Right lobe of liver (tissue), 6 donors: ENCODE measurements at regions of chr3 and their contacts with region 1.

Region 1: GRCh38 chr3:160343132-160343531 is 55.9 kb downstream of the IFT80 start:
- DNase-seq: no peak
- ATAC-seq: peak in 3 of 4 donors; percentile 47 to 60 (median 56)
- H3K4me3 ChIP-seq: no peak overlapping the region
- H3K27ac ChIP-seq: no peak overlapping the region
- H3K4me1 ChIP-seq: no peaks in the 10 kb centered on the region
- H3K27me3 ChIP-seq: no peaks in the 10 kb centered on the region
- CTCF ChIP-seq: peak; percentile 50 to 61 (median 53)
- POLR2A ChIP-seq: no peak

Region 2: DNA sequence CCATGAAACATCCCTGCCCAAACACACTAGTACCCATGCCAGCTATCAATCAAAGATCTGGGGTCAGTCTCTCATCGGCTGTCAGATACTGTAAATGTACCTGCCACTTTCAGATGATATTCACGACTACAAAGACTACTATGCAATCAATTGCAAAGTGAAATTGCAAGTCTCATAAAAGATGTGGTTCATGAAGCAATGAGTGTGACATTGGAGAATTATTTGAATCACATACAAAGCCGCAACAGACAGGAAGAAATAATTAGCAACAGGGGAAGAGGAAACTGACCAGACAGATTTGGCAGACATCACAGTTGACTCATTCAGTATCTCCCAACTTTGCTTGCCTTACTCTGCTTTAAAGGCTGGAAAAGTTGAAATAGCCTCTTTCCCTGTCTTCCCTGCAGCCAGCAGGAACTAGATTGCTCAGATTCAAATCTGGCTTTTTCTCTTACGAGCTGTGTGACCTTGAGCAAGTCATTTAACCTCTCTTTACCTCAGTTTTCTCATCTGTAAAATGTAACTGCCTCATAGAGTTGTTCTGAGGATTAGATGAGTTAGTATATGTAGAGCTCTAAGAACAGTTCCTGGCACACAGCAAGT is 213.6 kb before region 1 on chr3:
- intact Hi-C with region 1: no loop called
- DNase-seq: no peak
- ATAC-seq: peak in 3 of 4 donors; percentile 14 to 83 (median 46)
- H3K4me3 ChIP-seq: no peak overlapping the region
- H3K27ac ChIP-seq: no peak overlapping the region
- H3K4me1 ChIP-seq: no peaks in the 10 kb centered on the region
- H3K27me3 ChIP-seq: no peaks in the 10 kb centered on the region
- CTCF ChIP-seq: no peak
- POLR2A ChIP-seq: no peak

Region 3: DNA sequence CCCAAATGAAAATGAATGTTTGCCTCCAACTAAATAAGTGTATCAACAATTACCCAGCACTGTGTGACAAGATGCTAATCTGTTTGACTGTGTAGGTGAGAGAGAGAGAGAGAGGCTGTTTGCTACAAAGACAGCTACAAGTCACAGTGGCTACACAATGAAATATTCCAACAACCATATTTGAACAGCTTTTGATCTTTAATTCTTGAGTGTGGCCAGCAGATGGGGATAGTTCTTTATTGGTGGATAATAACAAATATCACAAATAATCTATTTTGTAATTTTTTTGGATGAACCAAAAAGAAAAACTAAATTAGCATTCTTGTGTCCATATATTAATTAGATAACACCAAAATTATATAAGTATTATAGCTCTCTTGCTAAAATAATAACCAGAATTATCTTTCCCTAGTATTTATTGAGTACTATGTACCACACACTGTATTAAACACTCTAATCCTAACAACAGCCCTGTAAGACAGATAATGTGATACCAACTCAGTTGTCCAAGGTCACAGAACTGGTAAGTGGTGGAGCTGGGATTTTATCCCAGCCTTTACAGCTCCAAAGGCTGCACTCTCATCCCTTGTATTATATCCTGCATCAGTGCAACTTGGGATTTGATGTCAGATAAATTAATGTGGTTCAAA is 179.8 kb before region 1 on chr3:
- intact Hi-C with region 1: loop called in 1 of 2 experiments (anchors 5 kb)
- DNase-seq: no peak
- ATAC-seq: peak; percentile 61 to 72 (median 66)
- H3K4me3 ChIP-seq: no peak overlapping the region
- H3K27ac ChIP-seq: no peak overlapping the region
- H3K4me1 ChIP-seq: no peaks in the 10 kb centered on the region
- H3K27me3 ChIP-seq: no peaks in the 10 kb centered on the region
- CTCF ChIP-seq: peak; percentile 55 to 65 (median 60)
- POLR2A ChIP-seq: no peak

Region 4: GRCh38 chr3:160169139-160169976 is 173.8 kb before region 1 on chr3:
- intact Hi-C with region 1: loop called in 1 of 2 experiments (anchors 5 kb)
- DNase-seq: no peak
- ATAC-seq: no peak
- H3K4me3 ChIP-seq: no peak overlapping the region
- H3K27ac ChIP-seq: no peak overlapping the region
- H3K4me1 ChIP-seq: no peaks in the 10 kb centered on the region
- H3K27me3 ChIP-seq: no peaks in the 10 kb centered on the region
- CTCF ChIP-seq: no peak
- POLR2A ChIP-seq: no peak

Region 5: DNA sequence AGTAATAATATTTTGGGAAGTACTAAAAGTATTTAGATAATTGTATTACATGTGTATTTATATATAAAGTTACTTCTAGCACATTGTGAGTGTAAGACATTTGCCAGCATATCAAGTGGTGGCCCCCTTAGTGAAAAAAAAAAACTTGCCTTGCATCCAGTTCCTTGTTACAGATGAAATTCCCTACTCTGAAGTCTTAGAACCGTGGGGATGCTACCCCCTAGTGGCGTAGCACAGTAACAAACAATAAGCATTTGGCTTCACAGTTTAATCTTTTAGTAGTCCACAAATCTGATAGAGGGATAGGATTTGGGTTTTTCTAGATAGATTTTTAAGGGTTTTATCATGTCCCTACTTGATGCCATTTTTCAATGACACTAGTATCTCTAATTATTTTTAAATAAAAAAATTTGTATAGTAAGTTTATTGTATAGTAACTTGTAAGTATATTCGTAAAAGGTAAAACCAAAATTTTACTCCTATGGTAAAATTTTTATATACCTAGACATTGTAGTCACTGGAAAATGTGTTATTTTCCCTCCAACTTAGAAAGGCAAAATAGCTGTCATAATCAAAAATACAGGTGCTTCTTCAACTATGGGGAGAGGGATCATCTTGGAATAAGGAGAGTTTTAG is 70.6 kb after region 1 on chr3:
- intact Hi-C with region 1: no loop called
- DNase-seq: peak in 2 of 3 donors; percentile 35 to 59
- ATAC-seq: peak; percentile 89 to 98 (median 95)
- H3K4me3 ChIP-seq: no peak overlapping the region
- H3K27ac ChIP-seq: no peak overlapping the region
- H3K4me1 ChIP-seq: no peaks in the 10 kb centered on the region
- H3K27me3 ChIP-seq: no peaks in the 10 kb centered on the region
- CTCF ChIP-seq: peak; percentile 78 to 92 (median 86)
- POLR2A ChIP-seq: no peak

Region 6: DNA sequence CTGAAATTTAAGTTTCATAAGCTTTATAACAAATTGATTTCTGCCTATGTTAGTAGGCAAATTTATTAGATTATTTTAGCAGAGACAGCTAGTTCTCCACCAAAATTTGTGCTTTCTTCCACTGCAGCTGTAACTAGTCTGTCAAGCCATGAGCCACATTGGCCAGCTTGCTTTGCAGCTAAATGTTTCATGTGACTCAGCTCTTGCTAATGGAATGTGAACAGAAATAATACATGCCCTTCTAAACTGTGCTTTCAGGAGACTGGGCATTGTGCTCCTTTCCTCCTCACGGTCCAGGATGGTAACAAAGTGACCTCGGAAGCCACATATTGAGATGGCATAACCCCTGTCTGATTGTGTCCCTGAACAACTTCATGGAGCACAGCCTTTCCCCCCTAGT is 273.6 kb after region 1 on chr3:
- intact Hi-C with region 1: no loop called
- DNase-seq: no peak
- ATAC-seq: peak in 1 of 4 donors; percentile 24
- H3K4me3 ChIP-seq: no peak overlapping the region
- H3K27ac ChIP-seq: peak overlapping the region in 1 of 3 donors; percentile 12
- H3K4me1 ChIP-seq: peaks cover 0 to 23% (median 0%) of the 10 kb centered on the region in 4 donors
- H3K27me3 ChIP-seq: no peaks in the 10 kb centered on the region
- CTCF ChIP-seq: no peak
- POLR2A ChIP-seq: no peak